ENCODE measurements at regions of chr1 and their contacts with region 1.

Region 1: DNA sequence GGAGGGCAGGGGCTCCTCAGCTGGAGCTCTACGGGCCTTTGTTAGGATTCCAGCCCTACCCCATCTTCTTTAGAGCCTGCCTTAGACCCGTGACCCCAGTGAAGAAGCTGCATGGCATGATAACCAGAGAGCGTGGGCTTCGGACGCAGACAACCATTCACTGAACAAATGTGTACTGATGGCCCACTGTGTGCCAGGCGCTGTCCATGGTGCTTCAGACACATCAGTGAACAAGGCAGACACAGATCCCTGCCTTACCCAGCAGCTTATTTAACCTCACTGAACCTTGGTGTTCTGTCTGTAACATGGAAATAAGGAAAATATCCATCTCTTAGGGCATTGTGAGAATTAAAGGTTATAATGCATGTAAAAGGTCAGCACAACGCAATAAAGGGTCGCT is 9.5 kb downstream of the CHIT1 start:
- DNase-seq: no peak
- CTCF ChIP-seq: no peak

Region 2: GRCh38 chr1:203038891-203039608 is 180.9 kb before region 1 on chr1:
- in situ Hi-C with region 1: loop called (anchors 10 kb)
- DNase-seq: peak; percentile 80
- CTCF ChIP-seq: peak; percentile 88